GM10248 (cell line): ENCODE measurements at regions of chr4 and their contacts with region 1.

Region 1: DNA sequence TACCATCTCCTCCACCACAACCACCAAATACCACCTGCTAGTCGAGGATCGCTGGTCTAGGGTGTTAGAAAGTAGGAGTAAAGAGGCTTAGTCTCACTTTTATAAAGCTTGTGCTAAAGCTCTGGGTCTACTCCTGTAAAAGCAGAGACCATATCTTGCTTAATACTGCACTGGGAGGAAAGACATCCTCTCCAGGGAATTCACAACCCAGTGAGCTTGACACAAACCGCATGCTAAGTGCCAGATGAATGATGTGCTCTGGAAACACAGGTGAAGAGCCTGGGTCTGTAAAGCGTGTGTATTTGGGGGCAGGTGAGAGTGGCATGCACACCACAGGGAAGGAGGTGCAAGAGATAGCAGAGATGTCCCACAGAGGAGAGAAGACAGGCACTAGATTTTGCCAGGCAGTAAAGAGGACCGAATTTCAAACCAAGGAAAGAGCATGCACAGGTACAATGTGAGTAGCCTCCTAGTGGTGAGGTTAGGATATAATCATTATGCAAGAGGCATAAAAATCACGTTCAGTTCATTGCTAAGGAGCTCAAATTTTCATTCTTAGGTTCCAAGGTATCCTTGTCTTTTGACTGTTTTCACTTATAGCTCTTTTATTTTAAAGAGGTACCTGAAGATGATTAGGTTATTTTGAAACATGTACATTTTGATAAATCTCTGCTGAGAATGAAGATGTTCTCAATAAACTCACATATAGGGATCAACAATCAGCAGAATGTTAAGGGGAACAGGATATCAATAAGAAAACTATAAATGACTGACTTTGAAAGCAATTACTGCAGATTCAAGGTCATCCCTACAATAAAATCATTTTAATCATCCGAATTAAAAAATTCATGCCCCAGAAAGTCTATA is 20.7 kb downstream of the TAPT1 start:
- DNase-seq: peak; percentile 50
- CTCF ChIP-seq: peak; percentile 50

Region 2: GRCh38 chr4:16171831-16172230 is 33.7 kb before region 1 on chr4:
- CTCF ChIA-PET with region 1: interaction called, 10 read pairs
- POLR2A ChIA-PET with region 1: no interaction called
- DNase-seq: no peak
- CTCF ChIP-seq: no peak

Region 3: GRCh38 chr4:16183604-16184003 is 21.9 kb before region 1 on chr4:
- CTCF ChIA-PET with region 1: interaction called, 20 read pairs
- POLR2A ChIA-PET with region 1: no interaction called
- DNase-seq: no peak
- CTCF ChIP-seq: no peak

Region 4: GRCh38 chr4:16217300-16218051 is 11.9 kb after region 1 on chr4:
- CTCF ChIA-PET with region 1: interaction called, 34 read pairs
- POLR2A ChIA-PET with region 1: no interaction called
- DNase-seq: peak; percentile 26
- CTCF ChIP-seq: no peak

Region 5: DNA sequence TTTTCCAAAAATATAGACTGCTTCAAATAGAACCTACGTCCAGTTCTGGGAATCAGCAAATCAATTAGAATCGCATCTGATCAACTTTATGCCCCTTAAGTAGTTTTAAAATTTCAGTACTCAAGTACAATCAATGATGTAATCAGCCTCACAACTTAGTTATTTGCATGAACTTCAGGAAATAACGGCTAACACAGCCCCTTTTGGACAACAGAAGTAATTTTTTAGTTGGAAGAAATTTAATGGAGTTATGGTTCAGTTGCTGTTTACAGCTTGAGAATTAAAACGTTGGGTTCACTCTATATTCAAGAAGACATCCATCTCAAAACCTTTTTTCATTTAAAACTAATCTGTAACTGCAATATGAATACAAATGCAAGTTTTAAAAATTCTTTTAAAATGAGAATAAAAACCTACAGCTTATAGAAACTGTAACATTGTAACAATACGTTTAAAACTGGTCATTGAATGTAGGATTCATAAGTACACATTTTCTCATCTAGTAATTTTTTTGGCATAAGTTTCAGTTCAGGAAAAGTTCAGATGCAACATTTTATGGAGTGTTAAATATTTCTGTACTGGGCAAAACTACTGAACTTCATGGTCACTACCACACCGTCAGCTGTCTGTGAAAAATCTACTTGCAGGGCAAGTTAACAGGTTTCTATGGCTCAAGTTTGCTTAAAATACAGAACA is 19.8 kb after region 1 on chr4:
- CTCF ChIA-PET with region 1: interaction called, 34 read pairs
- POLR2A ChIA-PET with region 1: interaction called, 3 read pairs
- DNase-seq: no peak
- CTCF ChIP-seq: no peak